AG04449 (cell line): ENCODE measurements at regions of chr1 and their contacts with region 1.

Region 1: DNA sequence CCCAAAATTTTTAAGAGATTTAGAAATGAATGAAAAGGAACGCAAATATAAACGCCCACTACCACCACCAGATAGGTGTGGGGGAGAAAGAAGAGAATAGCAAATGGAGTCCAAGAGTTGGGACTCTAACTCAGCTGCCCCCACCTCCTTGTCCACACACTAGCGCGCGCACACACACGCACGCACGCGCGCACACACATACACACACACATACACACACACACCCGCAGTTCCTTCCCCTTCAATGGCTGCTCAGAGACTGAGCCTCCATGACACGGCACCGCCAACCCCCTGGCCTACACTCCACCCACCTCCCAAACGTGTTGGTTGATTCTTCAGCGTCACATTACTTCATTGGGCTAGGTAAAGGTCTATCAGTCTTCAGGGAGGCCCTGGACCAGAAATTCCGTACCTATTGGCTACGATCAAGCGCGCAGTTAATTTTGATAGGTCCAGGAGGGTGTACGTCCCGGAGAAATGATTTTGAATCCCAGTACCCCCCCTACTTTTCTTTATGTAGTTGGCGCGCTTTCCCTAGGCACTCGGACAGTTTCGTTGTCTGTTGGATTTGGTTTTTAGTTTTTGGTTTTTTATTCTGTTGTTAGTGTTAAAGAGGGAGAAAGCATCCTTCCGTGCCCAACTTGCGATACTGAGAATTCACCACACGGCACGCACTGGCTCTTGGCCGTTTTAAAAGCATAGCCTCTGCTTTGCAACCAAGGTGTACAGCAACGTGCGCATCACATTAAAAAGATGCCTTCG is at the start of gene ANP32E:
- DNase-seq: peak; percentile 98
- H3K4me3 ChIP-seq: peak within 1 kb of the TSS; percentile 89
- CTCF ChIP-seq: no peak

Region 2: DNA sequence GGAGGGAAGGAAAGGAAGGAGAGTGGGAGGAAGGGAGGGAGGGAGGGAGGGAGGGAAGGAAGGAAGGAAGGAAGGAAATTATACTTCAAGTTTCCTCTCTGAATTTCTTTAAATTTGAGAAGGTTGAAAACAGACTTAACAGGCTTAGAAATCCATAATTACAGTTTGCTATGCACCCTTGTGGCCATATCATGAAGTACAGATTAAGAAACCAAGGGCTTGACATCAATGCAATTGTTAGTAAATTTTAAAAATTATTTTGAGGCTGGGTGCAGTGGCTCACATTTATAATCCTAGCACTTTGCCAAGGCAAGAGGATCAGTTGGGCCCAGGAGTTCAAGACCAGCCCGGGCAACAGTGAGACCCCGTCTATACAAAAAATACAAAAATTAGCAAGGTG is 14.5 kb before region 1 on chr1:
- CTCF ChIA-PET with region 1: interaction called, 30 read pairs
- POLR2A ChIA-PET with region 1: no interaction called
- DNase-seq: no peak
- H3K4me3 ChIP-seq: no peak overlapping the region
- CTCF ChIP-seq: peak; percentile 52